IMR-90 (cell line): ENCODE measurements at regions of chr17 and their contacts with region 1.

Region 1: GRCh38 chr17:36601303-36602029 is at the start of gene MRM1:
- DNase-seq: peak; percentile 89
- ATAC-seq: peak; percentile 93
- H3K4me3 ChIP-seq: peak within 1 kb of the TSS; percentile 79
- H3K27ac ChIP-seq: peak within 1 kb of the TSS; percentile 74
- H3K4me1 ChIP-seq: peaks cover 6% of the 10 kb centered on the region
- H3K27me3 ChIP-seq: no peaks in the 10 kb centered on the region
- CTCF ChIP-seq: peak; percentile 23; the same call in 1 of the 2 replicates
- POLR2A ChIP-seq: peak; percentile 81
- RAD21 ChIP-seq: no peak
- total RNA-seq, gene MRM1: 2.2 TPM in 2 replicates

Region 2: DNA sequence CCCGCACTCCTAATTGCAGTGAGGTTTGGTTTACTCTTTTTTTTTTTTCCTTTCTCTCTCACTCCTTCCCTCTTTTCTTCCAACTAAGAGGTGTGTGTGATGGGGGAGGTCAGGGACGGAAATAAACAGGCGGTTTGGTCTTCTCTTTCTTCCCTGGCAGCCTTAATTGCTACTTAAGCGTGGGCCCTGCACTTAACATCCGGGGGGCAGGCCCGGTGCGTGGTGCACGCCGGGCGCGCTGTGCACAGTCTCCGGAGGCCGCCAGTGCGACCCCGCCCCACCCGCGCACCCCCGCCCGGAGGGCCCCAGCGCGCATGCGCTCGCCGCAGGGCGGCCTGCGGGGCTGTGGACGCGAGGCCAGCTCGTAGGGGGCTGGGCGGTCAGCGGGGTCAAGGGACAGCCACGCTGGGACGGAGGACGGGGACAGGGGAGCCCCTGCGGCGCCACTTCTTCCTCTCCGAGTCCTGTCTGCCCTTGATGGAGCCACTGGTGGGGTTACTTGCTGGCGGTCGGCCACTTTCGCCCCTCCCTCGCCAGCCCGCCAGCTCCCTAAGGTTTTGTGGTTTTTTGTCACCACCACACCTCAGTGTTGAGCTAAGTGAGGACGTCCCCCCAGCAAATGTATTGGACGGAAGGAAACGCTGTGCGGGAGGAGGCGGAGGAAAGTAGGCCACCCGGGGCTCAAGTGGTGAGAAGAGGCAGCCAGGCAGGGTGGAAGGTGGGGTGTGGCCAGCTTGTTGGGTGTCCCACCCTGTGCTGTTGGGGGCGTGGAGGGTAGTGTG is 120.8 kb after region 1 on chr17:
- CTCF ChIA-PET with region 1: no interaction called
- POLR2A ChIA-PET with region 1: no interaction called
- dilution Hi-C with region 1: no loop called
- in situ Hi-C with region 1: no loop called
- intact Hi-C with region 1: no loop called
- DNase-seq: peak; percentile 5
- ATAC-seq: peak; percentile 92
- H3K4me3 ChIP-seq: peak overlapping the region; percentile 27
- H3K27ac ChIP-seq: no peak overlapping the region
- H3K4me1 ChIP-seq: 0 out of 2 replicates have a peak, but pooled peaks cover 1% of the 10 kb centered on the region
- H3K27me3 ChIP-seq: peaks cover 30% of the 10 kb centered on the region
- CTCF ChIP-seq: no peak
- POLR2A ChIP-seq: no peak
- RAD21 ChIP-seq: no peak

Region 3: DNA sequence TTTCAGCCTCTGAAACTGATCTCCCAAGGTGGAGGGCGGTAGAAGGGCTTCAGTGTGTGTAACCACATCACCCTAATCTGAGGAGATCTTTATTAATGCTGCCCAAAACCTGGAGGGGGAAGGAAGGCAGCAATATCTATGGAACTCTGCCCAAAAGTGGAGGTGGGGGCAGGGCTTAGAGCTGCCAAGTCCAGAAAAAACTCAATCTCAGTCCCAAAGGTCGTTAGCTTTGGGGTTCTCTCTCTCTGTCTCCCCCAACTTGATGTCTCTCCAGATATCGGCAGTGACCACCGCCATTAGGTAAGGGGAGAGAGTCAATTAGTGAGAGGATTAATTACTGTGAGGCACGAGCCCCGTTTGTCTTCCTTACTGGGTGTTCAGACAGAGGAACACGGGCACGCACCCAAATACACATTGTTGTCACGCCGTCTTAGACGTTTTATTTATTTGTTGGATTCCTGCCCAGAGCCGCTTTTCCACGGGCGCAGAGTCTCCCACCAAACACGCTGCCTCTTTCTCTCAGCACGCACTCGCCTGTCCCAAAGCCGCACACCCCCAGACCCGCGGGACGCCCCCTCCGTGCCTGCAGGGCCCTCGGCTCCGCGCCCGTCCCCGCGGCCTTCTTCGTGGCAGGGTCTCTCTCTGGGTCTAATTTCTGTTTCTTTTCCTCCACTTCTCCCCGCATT is 330.4 kb after region 1 on chr17:
- CTCF ChIA-PET with region 1: no interaction called
- POLR2A ChIA-PET with region 1: no interaction called
- dilution Hi-C with region 1: no loop called
- in situ Hi-C with region 1: no loop called
- intact Hi-C with region 1: no loop called
- DNase-seq: no peak
- ATAC-seq: no peak
- H3K4me3 ChIP-seq: no peak overlapping the region
- H3K27ac ChIP-seq: no peak overlapping the region
- H3K4me1 ChIP-seq: peaks cover 6% of the 10 kb centered on the region; the same call in 1 of the 2 replicates
- H3K27me3 ChIP-seq: peaks cover 99% of the 10 kb centered on the region
- CTCF ChIP-seq: no peak
- POLR2A ChIP-seq: no peak
- RAD21 ChIP-seq: no peak

Region 4: GRCh38 chr17:37047631-37048104 is 446.2 kb after region 1 on chr17:
- CTCF ChIA-PET with region 1: interaction called, 3 read pairs
- POLR2A ChIA-PET with region 1: no interaction called
- dilution Hi-C with region 1: no loop called
- in situ Hi-C with region 1: no loop called
- intact Hi-C with region 1: loop called (anchors 1 kb)
- DNase-seq: peak; percentile 80
- ATAC-seq: peak; percentile 86
- H3K4me3 ChIP-seq: no peak overlapping the region
- H3K27ac ChIP-seq: no peak overlapping the region
- H3K4me1 ChIP-seq: peaks cover 2% of the 10 kb centered on the region
- H3K27me3 ChIP-seq: no peaks in the 10 kb centered on the region
- CTCF ChIP-seq: peak; percentile 88
- POLR2A ChIP-seq: no peak
- RAD21 ChIP-seq: peak; percentile 86

Region 5: GRCh38 chr17:37220607-37220953 is 619.1 kb after region 1 on chr17:
- CTCF ChIA-PET with region 1: interaction called, 3 read pairs
- POLR2A ChIA-PET with region 1: no interaction called
- dilution Hi-C with region 1: no loop called
- in situ Hi-C with region 1: no loop called
- intact Hi-C with region 1: loop called (anchors 2 kb)
- DNase-seq: peak; percentile 54
- ATAC-seq: peak; percentile 88
- H3K4me3 ChIP-seq: no peak overlapping the region
- H3K27ac ChIP-seq: no peak overlapping the region
- H3K4me1 ChIP-seq: no peaks in the 10 kb centered on the region; the same call in 1 of the 2 replicates
- H3K27me3 ChIP-seq: no peaks in the 10 kb centered on the region
- CTCF ChIP-seq: peak; percentile 67
- POLR2A ChIP-seq: no peak
- RAD21 ChIP-seq: peak; percentile 81